ENCODE measurements at regions of chr14 and their contacts with region 1.

Region 1: DNA sequence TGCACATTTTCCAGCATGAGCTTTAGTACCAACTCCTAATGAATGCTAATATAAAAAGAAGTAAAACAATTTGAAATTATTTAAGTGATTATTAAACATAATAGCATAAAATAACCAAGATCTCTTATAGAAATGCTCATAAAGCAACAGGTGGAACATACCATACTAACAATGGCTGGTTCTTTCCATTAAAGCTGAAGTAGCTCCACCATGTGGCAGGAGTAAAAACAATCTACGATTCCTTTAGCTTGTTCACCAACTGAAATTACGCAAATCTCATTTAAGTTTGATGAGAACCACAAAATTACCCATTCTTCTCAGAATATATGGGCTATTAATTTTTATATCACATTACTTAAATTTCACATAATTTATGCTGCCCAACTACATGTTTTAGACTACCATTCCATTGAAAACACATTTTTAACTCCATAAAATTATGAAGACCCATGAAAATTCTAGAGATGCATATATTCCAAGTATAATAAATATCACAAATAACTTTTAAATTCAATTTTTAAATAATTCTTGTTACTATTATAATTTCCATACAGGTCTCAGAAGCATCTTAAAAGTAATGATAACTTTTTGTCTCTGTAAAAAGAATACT is 213.6 kb downstream of the DAD1 start:
- DNase-seq: no peak
- ATAC-seq: no peak
- H3K4me3 ChIP-seq: no peak overlapping the region
- H3K27ac ChIP-seq: no peak overlapping the region
- H3K4me1 ChIP-seq: peaks cover 0 to 10% (median under 1%) of the 10 kb centered on the region in 12 donors
- H3K27me3 ChIP-seq: peaks cover 0 to 8% (median 0%) of the 10 kb centered on the region in 9 donors
- CTCF ChIP-seq: peak; percentile 28 to 76 (median 64)
- POLR2A ChIP-seq: no peak

Region 2: GRCh38 chr14:21711360-21711961 is 664.0 kb before region 1 on chr14:
- intact Hi-C with region 1: no loop called
- DNase-seq: no peak
- ATAC-seq: no peak
- H3K4me3 ChIP-seq: no peak overlapping the region
- H3K27ac ChIP-seq: no peak overlapping the region
- H3K4me1 ChIP-seq: no peaks in the 10 kb centered on the region
- H3K27me3 ChIP-seq: peaks cover 0 to 5% (median 0%) of the 10 kb centered on the region in 9 donors
- CTCF ChIP-seq: peak; percentile 49 to 79 (median 68)
- POLR2A ChIP-seq: no peak

Region 3: DNA sequence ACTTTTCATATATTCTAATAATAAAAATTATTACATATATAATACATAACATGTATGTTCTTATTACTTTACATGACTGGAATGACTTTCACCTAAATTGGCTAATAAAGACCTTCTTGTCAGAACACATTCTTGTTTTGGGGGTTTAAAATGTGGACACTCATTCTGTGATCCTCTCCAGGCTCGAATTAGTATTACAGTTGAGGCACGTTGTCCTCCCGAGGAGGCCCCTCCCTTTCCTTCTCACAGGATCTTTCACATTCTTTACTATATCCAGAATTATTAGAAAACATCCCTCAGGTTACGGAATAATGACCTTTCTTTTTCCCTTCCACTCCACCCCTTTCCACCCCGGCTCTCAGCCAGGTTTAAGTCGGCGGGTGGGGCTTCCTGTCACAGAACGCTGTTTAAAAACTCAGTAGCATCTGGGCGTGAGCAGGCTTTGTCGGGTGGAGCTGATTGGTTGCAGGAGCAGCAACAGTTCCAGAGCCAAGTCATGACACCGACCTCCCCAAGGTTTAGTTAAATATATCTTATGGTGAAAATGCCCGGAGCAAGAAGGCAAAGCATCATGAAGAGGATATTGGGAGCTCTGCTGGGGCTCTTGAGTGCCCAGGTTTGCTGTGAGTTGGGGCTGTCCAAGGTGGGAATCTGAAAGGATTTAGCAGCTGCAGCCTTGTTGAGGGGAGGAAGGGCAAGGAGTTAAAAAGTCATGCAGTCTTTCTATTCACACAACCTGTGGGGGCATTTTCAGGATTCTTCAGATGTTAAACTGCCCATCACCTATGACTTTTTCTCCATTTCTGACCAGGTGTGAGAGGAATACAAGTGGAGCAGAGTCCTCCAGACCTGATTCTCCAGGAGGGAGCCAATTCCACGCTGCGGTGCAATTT is 305.1 kb before region 1 on chr14:
- intact Hi-C with region 1: no loop called
- DNase-seq: peak; percentile 19 to 69 (median 47)
- ATAC-seq: peak in 3 of 4 donors; percentile 74 to 93 (median 89)
- H3K4me3 ChIP-seq: peak overlapping the region in 7 of 12 donors; percentile 7 to 36 (median 21)
- H3K27ac ChIP-seq: peak overlapping the region in 8 of 12 donors; percentile 6 to 55 (median 29)
- H3K4me1 ChIP-seq: peaks cover 0 to 12% (median 0%) of the 10 kb centered on the region in 12 donors
- H3K27me3 ChIP-seq: peaks cover 0 to 3% (median 0%) of the 10 kb centered on the region in 9 donors
- CTCF ChIP-seq: no peak
- POLR2A ChIP-seq: no peak

Region 4: GRCh38 chr14:22221508-22221907 is 153.9 kb before region 1 on chr14:
- intact Hi-C with region 1: loop called in 3 of 10 experiments (anchors 10 kb)
- DNase-seq: no peak
- ATAC-seq: no peak
- H3K4me3 ChIP-seq: no peak overlapping the region
- H3K27ac ChIP-seq: no peak overlapping the region
- H3K4me1 ChIP-seq: no peaks in the 10 kb centered on the region
- H3K27me3 ChIP-seq: peaks cover 0 to 13% (median 0%) of the 10 kb centered on the region in 9 donors
- CTCF ChIP-seq: peak in 2 of 12 donors; percentile 19 to 24
- POLR2A ChIP-seq: no peak

Region 5: GRCh38 chr14:22314181-22314820 is 61.1 kb before region 1 on chr14:
- intact Hi-C with region 1: loop called in 5 of 10 experiments (anchors 1 to 2 kb)
- DNase-seq: no peak
- ATAC-seq: peak in 3 of 4 donors; percentile 55 to 82 (median 69)
- H3K4me3 ChIP-seq: no peak overlapping the region
- H3K27ac ChIP-seq: no peak overlapping the region
- H3K4me1 ChIP-seq: no peaks in the 10 kb centered on the region
- H3K27me3 ChIP-seq: no peaks in the 10 kb centered on the region
- CTCF ChIP-seq: peak; percentile 56 to 74 (median 66)
- POLR2A ChIP-seq: no peak

Region 6: DNA sequence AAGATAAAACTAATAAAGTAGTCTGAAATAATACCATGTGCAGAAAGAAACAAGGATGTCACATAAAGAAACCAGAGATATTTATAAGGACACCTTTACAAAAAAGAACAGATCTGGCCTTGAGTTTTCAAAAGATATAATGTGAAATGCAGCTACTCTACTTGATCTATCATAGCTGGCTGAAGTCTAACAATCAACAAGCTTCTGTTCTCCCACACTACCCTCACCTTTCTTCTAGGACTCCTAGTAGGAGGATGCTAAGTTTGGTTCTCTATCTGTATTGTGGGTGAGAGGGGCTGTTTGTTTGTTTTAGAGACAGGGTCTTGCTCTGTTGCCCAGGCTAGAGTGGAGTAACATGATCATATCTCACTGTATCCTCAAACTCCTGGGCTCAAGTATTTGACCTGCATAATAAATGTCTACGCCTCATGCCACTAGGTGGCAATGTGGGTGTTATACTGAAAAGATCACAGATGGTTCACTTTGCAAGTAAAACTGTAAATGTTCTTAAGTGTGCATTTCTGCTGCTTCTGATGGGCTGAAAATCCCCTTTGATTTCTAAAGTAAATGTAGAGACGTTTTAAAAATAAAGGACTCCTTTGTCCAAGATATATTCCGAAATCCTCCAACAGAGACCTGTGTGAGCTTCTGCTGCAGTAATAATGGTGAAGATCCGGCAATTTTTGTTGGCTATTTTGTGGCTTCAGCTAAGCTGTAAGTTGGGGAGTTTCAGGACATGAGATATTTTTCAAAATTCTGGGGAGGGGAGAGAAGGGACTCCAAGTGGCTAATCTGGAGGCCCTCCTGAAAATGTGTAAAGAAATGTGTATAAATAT is 55.7 kb before region 1 on chr14:
- intact Hi-C with region 1: loop called (anchors 1 to 2 kb)
- DNase-seq: peak in 4 of 5 donors; percentile 18 to 56 (median 38)
- ATAC-seq: peak in 3 of 4 donors; percentile 49 to 75 (median 58)
- H3K4me3 ChIP-seq: no peak overlapping the region
- H3K27ac ChIP-seq: no peak overlapping the region
- H3K4me1 ChIP-seq: no peaks in the 10 kb centered on the region
- H3K27me3 ChIP-seq: peaks cover 0 to 5% (median 0%) of the 10 kb centered on the region in 9 donors
- CTCF ChIP-seq: peak; percentile 56 to 81 (median 66)
- POLR2A ChIP-seq: no peak

Measured in heart left ventricle (tissue), 16 donors.